ENCODE measurements at regions of chr2 and their contacts with region 1.

Region 1: DNA sequence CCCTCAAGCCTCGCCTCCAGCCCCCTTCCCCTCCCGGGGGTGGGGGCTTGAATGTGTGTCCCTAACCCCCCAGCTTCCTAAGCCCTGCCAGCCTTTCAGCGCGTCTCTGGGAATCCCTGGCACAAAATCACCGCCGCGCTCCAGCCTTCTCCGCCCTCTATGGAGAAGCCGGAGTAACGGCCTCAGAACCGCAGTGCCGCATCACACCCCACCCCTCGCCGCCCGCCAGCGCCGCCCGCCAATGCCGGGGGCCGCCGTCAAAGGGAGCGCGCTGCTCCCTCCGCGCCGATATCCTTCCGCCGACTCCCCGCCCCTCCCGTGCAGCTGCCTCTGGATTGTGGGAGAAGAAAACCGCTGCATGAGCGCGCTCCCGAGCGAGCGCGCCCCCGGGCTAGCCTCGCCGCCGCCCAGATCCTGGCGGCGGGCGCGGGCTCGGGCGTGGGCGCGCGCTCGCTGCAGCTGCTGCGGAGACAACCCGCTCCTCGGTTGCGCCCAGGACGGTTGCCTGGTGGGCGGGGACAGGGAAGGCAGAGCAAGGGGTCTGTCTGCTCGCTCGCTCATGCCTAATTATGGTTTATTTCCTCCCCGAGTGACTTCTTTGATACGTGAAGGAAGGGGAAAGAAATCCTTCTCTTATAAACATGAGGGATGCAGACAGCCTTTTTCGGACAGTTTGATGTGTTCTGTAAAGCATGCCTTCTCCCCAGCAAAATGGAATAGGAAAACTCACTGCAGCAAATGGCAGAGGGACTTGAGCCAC is at the start of gene CCDC88A:
- DNase-seq: peak; percentile 78
- H3K4me3 Mint-ChIP-seq: peak within 1 kb of the TSS; percentile 89
- H3K27ac Mint-ChIP-seq: peak within 1 kb of the TSS; percentile 50
- H3K4me1 Mint-ChIP-seq: peaks cover 23% of the 10 kb centered on the region
- H3K27me3 Mint-ChIP-seq: peaks cover 25% of the 10 kb centered on the region
- total RNA-seq, gene CCDC88A: 6.4 and 8.4 TPM in 2 replicates

Region 2: GRCh38 chr2:55223958-55224760 is 195.7 kb before region 1 on chr2:
- intact Hi-C with region 1: loop called (anchors 1 kb)
- DNase-seq: no peak
- H3K4me3 Mint-ChIP-seq: peak overlapping the region; percentile 71
- H3K27ac Mint-ChIP-seq: peak overlapping the region; percentile 67
- H3K4me1 Mint-ChIP-seq: peaks cover 46% of the 10 kb centered on the region
- H3K27me3 Mint-ChIP-seq: no peaks in the 10 kb centered on the region

Region 3: GRCh38 chr2:55268907-55269644 is 150.8 kb before region 1 on chr2 and contains the start of gene MTIF2:
- intact Hi-C with region 1: loop called (anchors 1 kb)
- DNase-seq: peak; percentile 87
- H3K4me3 Mint-ChIP-seq: peak within 1 kb of the TSS; percentile 93
- H3K27ac Mint-ChIP-seq: peak within 1 kb of the TSS; percentile 85
- H3K4me1 Mint-ChIP-seq: peaks cover 14% of the 10 kb centered on the region
- H3K27me3 Mint-ChIP-seq: no peaks in the 10 kb centered on the region
- total RNA-seq, gene MTIF2: 42.3 and 44.1 TPM in 2 replicates

Region 4: GRCh38 chr2:55311444-55311870 is 108.4 kb before region 1 on chr2:
- intact Hi-C with region 1: loop called (anchors 1 kb)
- DNase-seq: no peak
- H3K4me3 Mint-ChIP-seq: no peak overlapping the region
- H3K27ac Mint-ChIP-seq: peak overlapping the region; percentile 57
- H3K4me1 Mint-ChIP-seq: peaks cover 22% of the 10 kb centered on the region
- H3K27me3 Mint-ChIP-seq: no peaks in the 10 kb centered on the region

Region 5: GRCh38 chr2:55693181-55694134 is 273.6 kb after region 1 on chr2 and contains the start of gene PNPT1:
- intact Hi-C with region 1: loop called (anchors 5 kb)
- DNase-seq: peak; percentile 92
- H3K4me3 Mint-ChIP-seq: peak within 1 kb of the TSS; percentile 98
- H3K27ac Mint-ChIP-seq: peak within 1 kb of the TSS; percentile 89
- H3K4me1 Mint-ChIP-seq: peaks cover 39% of the 10 kb centered on the region
- H3K27me3 Mint-ChIP-seq: peaks cover 2% of the 10 kb centered on the region
- total RNA-seq, gene PNPT1: 65.1 and 71.1 TPM in 2 replicates